ENCODE measurements at regions of chr21 and their contacts with region 1.

Region 1: GRCh38 chr21:33449616-33450015 is 30.2 kb downstream of the TMEM50B start:
- DNase-seq: no peak
- H3K4me3 ChIP-seq: no peak overlapping the region
- H3K4me3 Mint-ChIP-seq: no peak overlapping the region
- H3K27ac ChIP-seq: no peak overlapping the region
- H3K27ac Mint-ChIP-seq: no peak overlapping the region
- H3K4me1 ChIP-seq: peaks cover 4 to 8% of the 10 kb centered on the region in 2 donors
- H3K4me1 Mint-ChIP-seq: peaks cover 4% of the 10 kb centered on the region
- H3K27me3 ChIP-seq: no peaks in the 10 kb centered on the region
- H3K27me3 Mint-ChIP-seq: no peaks in the 10 kb centered on the region
- CTCF ChIP-seq: no peak

Region 2: DNA sequence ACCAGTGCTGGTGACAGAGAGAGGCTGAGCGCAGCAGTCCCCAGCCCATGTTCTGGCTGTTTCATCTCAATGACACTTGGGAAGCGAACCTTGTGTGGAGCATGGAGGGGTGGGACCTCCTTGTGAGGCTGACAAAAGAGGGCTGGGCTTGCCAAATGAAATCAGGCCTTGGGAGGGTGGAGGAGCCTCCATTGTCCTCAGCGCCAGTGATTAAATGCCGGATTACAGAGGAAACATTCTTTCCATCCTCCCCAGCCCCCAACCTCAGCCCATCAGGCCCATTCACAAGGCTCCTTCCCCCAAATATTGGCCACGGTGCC is 614.7 kb before region 1 on chr21:
- intact Hi-C with region 1: loop called in 1 of 2 experiments (anchors 5 kb)
- DNase-seq: no peak
- H3K4me3 ChIP-seq: no peak overlapping the region
- H3K4me3 Mint-ChIP-seq: no peak overlapping the region
- H3K27ac ChIP-seq: no peak overlapping the region
- H3K27ac Mint-ChIP-seq: no peak overlapping the region
- H3K4me1 ChIP-seq: no peaks in the 10 kb centered on the region
- H3K4me1 Mint-ChIP-seq: peaks cover 3% of the 10 kb centered on the region
- H3K27me3 ChIP-seq: no peaks in the 10 kb centered on the region
- H3K27me3 Mint-ChIP-seq: peaks cover 3 to 7% (median 5%) of the 10 kb centered on the region in 3 donors
- CTCF ChIP-seq: no peak

Measured in CD14-positive monocyte (primary cell).